IMR-90 (cell line): ENCODE measurements at regions of chr5 and their contacts with region 1.

Region 1: DNA sequence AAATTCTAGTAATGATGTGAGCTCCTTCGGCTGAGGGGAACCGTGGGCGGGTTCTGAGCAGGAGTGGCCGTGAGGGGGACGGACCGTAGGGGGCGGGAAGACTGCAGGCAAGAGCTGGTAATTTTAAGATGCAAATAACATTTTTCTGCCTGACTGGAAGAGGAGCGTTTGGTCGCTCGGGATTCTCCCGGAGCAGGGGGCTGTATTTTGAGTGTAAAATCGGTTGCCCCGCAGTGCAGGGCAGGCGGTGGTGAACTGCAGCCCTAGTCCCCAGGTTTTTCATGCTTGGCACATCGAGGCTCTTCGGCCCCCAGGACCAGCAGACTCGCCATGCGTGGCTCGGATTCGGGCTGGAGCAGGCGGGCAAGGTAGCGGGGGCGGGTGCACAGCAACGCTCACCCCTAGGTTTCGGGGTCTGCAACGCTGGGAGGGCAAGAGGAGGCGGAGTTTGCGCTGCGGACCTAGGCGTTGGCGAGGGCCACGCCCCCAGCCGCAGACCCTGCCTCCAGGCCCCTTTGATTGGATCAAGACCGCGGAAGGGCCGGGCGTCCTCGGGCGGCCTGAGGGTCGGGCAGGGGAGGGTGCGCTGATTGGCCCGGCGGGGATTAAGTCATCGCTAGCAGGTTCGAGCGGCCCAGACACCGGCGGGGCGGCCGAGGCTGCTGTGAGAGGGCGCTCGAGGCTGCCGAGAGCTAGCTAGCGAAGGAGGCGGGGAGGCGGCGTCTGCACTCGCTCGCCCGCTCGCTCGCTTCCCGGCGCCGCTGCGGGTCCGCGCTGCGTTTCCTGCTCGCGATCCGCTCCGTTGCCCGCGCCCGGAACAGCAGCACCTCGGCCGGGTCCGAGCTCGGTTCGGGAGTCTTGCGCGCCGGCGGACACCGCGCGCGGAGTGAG is at the start of gene ARHGAP26:
- DNase-seq: peak; percentile 91
- ATAC-seq: peak; percentile 100
- H3K4me3 ChIP-seq: peak within 1 kb of the TSS; percentile 87
- H3K27ac ChIP-seq: no peak within 1 kb of the TSS; the same call in 1 of the 2 replicates
- H3K4me1 ChIP-seq: peaks cover 3% of the 10 kb centered on the region; the same call in 1 of the 2 replicates
- H3K27me3 ChIP-seq: peaks cover 34% of the 10 kb centered on the region
- CTCF ChIP-seq: peak; percentile 46
- POLR2A ChIP-seq: peak; percentile 69
- RAD21 ChIP-seq: peak; percentile 55
- total RNA-seq, gene ARHGAP26: 0.54 and 0.56 TPM in 2 replicates

Region 2: DNA sequence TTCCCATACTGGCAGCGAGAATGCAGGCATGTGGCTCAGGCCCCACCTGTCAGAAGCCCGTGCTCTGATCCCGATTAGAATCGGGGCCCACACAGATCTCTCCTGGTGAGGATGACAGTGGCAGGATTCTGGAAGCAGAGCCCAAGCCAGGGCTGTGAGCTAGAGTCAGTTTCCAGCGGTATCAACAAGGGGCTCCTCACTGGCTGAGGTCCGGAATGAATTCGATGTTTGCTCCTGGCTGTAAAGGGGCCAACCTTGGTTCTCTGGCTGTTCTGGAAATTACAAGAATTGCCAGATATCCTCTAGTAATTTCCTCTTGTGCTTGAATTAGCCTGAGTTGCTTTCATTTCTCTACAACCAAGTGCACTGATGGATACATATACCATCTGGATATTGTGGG is 316.1 kb before region 1 on chr5:
- CTCF ChIA-PET with region 1: no interaction called
- POLR2A ChIA-PET with region 1: no interaction called
- dilution Hi-C with region 1: no loop called
- in situ Hi-C with region 1: no loop called
- intact Hi-C with region 1: no loop called
- DNase-seq: no peak
- ATAC-seq: no peak
- H3K4me3 ChIP-seq: no peak overlapping the region
- H3K27ac ChIP-seq: no peak overlapping the region
- H3K4me1 ChIP-seq: no peaks in the 10 kb centered on the region
- H3K27me3 ChIP-seq: no peaks in the 10 kb centered on the region
- CTCF ChIP-seq: no peak
- POLR2A ChIP-seq: no peak
- RAD21 ChIP-seq: no peak

Region 3: GRCh38 chr5:142726188-142726731 is 43.7 kb before region 1 on chr5:
- CTCF ChIA-PET with region 1: no interaction called
- POLR2A ChIA-PET with region 1: no interaction called
- dilution Hi-C with region 1: no loop called
- in situ Hi-C with region 1: no loop called
- intact Hi-C with region 1: loop called (anchors 2 kb)
- DNase-seq: peak; percentile 91
- ATAC-seq: peak; percentile 90
- H3K4me3 ChIP-seq: no peak overlapping the region
- H3K27ac ChIP-seq: no peak overlapping the region
- H3K4me1 ChIP-seq: peaks cover 10% of the 10 kb centered on the region
- H3K27me3 ChIP-seq: peaks cover 7% of the 10 kb centered on the region; the same call in 1 of the 2 replicates
- CTCF ChIP-seq: no peak
- POLR2A ChIP-seq: no peak
- RAD21 ChIP-seq: no peak

Region 4: DNA sequence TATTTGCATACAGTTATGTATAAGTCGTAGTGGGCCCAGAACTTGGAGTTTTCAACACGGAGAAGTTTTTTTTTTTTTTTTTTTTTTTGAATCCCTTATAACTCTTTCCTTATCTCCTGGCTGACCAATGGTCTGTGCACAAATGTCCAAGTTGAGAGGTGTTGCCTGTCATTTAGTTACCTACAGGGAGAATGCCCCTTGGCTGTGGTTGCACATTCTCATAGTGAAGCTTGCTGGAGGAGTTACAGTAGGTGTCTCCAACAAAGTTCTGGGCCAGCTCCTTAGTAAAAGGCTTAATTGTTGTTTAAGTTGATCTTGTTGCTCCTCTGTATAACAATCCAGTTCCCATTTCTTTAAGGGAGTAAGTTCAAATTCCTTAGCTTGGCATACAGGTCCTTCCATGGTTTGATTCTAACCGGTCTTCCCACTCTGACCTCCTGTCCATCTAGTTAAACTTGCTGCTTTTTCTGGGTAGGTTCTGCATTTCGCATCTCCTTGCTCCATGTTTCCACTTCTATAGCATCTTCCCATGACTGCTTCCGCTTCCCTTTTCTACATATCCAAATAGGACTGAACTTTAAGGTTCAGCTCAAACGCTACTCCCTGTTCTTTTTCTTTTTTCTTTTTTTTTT is 95.5 kb after region 1 on chr5:
- CTCF ChIA-PET with region 1: interaction called, 3 read pairs
- POLR2A ChIA-PET with region 1: no interaction called
- dilution Hi-C with region 1: no loop called
- in situ Hi-C with region 1: loop called (anchors 5 kb)
- intact Hi-C with region 1: loop called (anchors 2 kb)
- DNase-seq: no peak
- ATAC-seq: no peak
- H3K4me3 ChIP-seq: no peak overlapping the region
- H3K27ac ChIP-seq: no peak overlapping the region
- H3K4me1 ChIP-seq: peaks cover 2% of the 10 kb centered on the region; the same call in 1 of the 2 replicates
- H3K27me3 ChIP-seq: peaks cover 21% of the 10 kb centered on the region
- CTCF ChIP-seq: no peak
- POLR2A ChIP-seq: no peak
- RAD21 ChIP-seq: no peak